A549 (cell line): ENCODE measurements at regions of chr7 and their contacts with region 1.

Region 1: GRCh38 chr7:121395961-121396757 is at the start of gene FAM3C:
- DNase-seq: peak; percentile 75 to 90
- ATAC-seq: peak; percentile 93 to 99
- H3K4me3 ChIP-seq: peak within 1 kb of the TSS; percentile 96
- H3K27ac ChIP-seq: peak within 1 kb of the TSS; percentile 78 to 95
- H3K4me1 ChIP-seq: peaks cover 24% of the 10 kb centered on the region
- CTCF ChIP-seq: peak; percentile 85
- EP300 ChIP-seq: no peak
- POLR2A ChIP-seq: peak; percentile 58
- RAD21 ChIP-seq: 0 out of 5 replicates have a peak, but pooled peaks of 1 of the 2 experiments have one; percentile 32
- polyA plus RNA-seq, gene FAM3C: 28.7 and 46.4 TPM in 2 replicates

Region 2: DNA sequence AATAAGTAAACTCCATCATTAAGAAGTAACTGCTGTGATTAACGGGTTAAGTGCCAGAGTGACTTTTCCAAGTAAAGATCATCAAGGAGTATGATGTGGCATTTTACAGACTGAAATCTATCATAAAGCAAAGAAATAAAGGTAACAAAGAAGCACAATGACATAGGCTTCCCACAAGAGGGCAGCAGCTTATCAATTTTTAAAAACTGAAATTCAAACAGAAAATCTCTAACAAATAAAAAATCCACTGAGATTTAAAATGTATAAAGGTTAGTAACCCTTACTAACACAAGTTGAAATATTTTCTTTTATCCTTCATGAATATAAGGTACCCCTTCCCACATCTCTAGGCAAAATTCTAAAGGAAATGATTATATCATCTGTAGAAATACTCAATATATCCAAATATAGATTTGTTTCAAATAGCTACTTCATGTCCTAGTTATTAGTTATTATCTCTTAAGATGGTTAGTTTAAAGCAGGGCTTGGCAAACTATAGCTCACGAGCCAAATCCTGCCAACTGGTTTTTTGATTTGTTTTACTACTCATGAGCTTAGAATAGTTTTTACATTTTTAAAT is 29.2 kb before region 1 on chr7:
- CTCF ChIA-PET with region 1: interaction called, 17 read pairs
- POLR2A ChIA-PET with region 1: no interaction called
- DNase-seq: peak; percentile 6 to 34
- ATAC-seq: peak in 1 of 2 experiments; percentile 44; a peak in 2 of 6 replicates
- H3K4me3 ChIP-seq: no peak overlapping the region
- H3K27ac ChIP-seq: no peak overlapping the region
- H3K4me1 ChIP-seq: peaks cover 5% of the 10 kb centered on the region; the same call in 2 of the 3 replicates
- CTCF ChIP-seq: peak; percentile 87
- EP300 ChIP-seq: no peak
- POLR2A ChIP-seq: no peak
- RAD21 ChIP-seq: peak; percentile 78 to 86

Region 3: GRCh38 chr7:121379930-121380329 is 16.2 kb before region 1 on chr7:
- CTCF ChIA-PET with region 1: interaction called, 62 read pairs
- POLR2A ChIA-PET with region 1: interaction called, 4 read pairs
- DNase-seq: no peak
- ATAC-seq: no peak
- H3K4me3 ChIP-seq: no peak overlapping the region
- H3K27ac ChIP-seq: no peak overlapping the region
- H3K4me1 ChIP-seq: no peaks in the 10 kb centered on the region
- CTCF ChIP-seq: no peak
- EP300 ChIP-seq: no peak
- POLR2A ChIP-seq: no peak
- RAD21 ChIP-seq: no peak

Region 4: GRCh38 chr7:121406944-121407343 is 10.8 kb after region 1 on chr7:
- CTCF ChIA-PET with region 1: interaction called, 31 read pairs
- POLR2A ChIA-PET with region 1: interaction called, 5 read pairs
- DNase-seq: no peak
- ATAC-seq: no peak
- H3K4me3 ChIP-seq: no peak overlapping the region
- H3K27ac ChIP-seq: no peak overlapping the region
- H3K4me1 ChIP-seq: no peaks in the 10 kb centered on the region
- CTCF ChIP-seq: no peak
- EP300 ChIP-seq: no peak
- POLR2A ChIP-seq: no peak
- RAD21 ChIP-seq: no peak